ENCODE measurements at regions of chr17 and their contacts with region 1.

Region 1: DNA sequence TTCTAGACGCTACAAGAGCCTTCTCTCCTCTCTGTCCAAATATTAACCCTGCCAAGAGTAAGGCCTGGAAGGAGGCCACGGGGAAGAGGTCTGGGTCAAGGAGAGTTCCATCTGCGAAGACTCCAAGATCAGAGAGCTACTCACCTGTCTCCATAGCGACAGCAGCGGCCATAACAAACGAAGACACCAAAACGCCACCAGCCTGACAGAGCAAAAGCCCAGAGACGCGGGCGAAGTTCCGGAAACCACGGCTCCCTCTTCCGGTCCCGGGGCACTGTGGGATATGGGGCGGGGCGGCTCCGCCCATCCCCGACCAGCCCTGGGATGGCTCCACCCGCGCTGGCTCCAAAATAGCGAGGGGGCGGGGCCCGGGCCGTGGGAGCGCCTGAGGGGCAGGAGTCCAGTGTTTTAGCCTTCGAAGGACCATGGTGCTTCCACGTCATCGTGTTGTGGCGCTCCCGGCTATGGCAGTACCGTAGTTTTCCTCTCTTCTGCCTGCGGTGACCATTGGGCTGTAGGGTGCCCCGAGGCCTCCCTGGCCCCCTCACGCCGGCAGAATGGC is at the starts of genes C17orf100 and MED31:
- DNase-seq: peak; percentile 85 to 96 (median 91)
- ATAC-seq: peak; percentile 90 to 96 (median 96)
- H3K4me3 ChIP-seq: peak within 1 kb of the TSS; percentile 69 to 79
- H3K4me3 Mint-ChIP-seq: peak within 1 kb of the TSS; percentile 97 to 99 (median 98)
- H3K27ac ChIP-seq: peak within 1 kb of the TSS; percentile 97
- H3K27ac Mint-ChIP-seq: peak within 1 kb of the TSS; percentile 99
- H3K4me1 ChIP-seq: peaks cover 20 to 36% of the 10 kb centered on the region in 2 experiments
- H3K4me1 Mint-ChIP-seq: peaks cover 68 to 80% (median 75%) of the 10 kb centered on the region in 3 donors
- H3K27me3 ChIP-seq: peaks cover 0 to 13% of the 10 kb centered on the region in 2 experiments
- H3K27me3 Mint-ChIP-seq: no peaks in the 10 kb centered on the region
- total RNA-seq, gene C17orf100: 1.1 to 3.5 (median 2.8) TPM
- total RNA-seq, gene MED31: 18.9 to 26.3 (median 22.1) TPM

Region 2: DNA sequence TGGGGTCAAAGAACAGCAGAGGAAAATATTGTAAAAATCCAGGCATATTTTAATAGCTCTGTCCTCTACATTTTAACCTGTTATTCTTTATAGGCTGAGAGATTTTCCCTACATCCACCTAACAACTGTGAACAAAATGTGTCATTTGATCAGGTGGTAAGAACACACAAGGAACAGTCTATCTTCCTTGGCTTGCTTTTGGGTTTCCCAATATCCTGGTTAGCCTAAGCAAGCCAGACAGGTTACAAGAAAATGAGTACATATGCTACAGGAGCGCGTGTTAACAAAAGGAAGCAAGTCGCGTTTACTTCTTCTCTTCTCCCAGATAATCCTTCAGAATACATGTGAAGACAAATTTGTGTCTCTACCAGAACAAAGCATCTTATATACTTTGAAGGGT is 64.1 kb before region 1 on chr17:
- CTCF ChIA-PET with region 1: no interaction called
- POLR2A ChIA-PET with region 1: no interaction called
- DNase-seq: no peak
- ATAC-seq: no peak
- H3K4me3 ChIP-seq: no peak overlapping the region
- H3K4me3 Mint-ChIP-seq: no peak overlapping the region
- H3K27ac ChIP-seq: no peak overlapping the region
- H3K27ac Mint-ChIP-seq: no peak overlapping the region
- H3K4me1 ChIP-seq: no peaks in the 10 kb centered on the region
- H3K4me1 Mint-ChIP-seq: no peaks in the 10 kb centered on the region
- H3K27me3 ChIP-seq: no peaks in the 10 kb centered on the region
- H3K27me3 Mint-ChIP-seq: no peaks in the 10 kb centered on the region

Region 3: GRCh38 chr17:6630390-6630789 is 21.0 kb before region 1 on chr17:
- CTCF ChIA-PET with region 1: no interaction called
- POLR2A ChIA-PET with region 1: no interaction called
- DNase-seq: no peak
- ATAC-seq: no peak
- H3K4me3 ChIP-seq: no peak overlapping the region
- H3K4me3 Mint-ChIP-seq: no peak overlapping the region
- H3K27ac ChIP-seq: no peak overlapping the region
- H3K27ac Mint-ChIP-seq: no peak overlapping the region
- H3K4me1 ChIP-seq: no peaks in the 10 kb centered on the region
- H3K4me1 Mint-ChIP-seq: peaks cover 5 to 9% (median 5%) of the 10 kb centered on the region in 3 donors
- H3K27me3 ChIP-seq: no peaks in the 10 kb centered on the region
- H3K27me3 Mint-ChIP-seq: no peaks in the 10 kb centered on the region

Region 4: GRCh38 chr17:6640536-6641373 is 10.7 kb before region 1 on chr17 and contains the starts of genes KIAA0753 and TXNDC17:
- CTCF ChIA-PET with region 1: interaction called in 1 of 2 experiments, 10 read pairs
- POLR2A ChIA-PET with region 1: interaction called in 1 of 2 experiments, 31 read pairs
- DNase-seq: peak; percentile 63 to 94 (median 82)
- ATAC-seq: peak; percentile 91 to 96 (median 94)
- H3K4me3 ChIP-seq: peak within 1 kb of the TSS; percentile 89 to 98
- H3K4me3 Mint-ChIP-seq: peak within 1 kb of the TSS; percentile 92 to 95 (median 95)
- H3K27ac ChIP-seq: peak within 1 kb of the TSS; percentile 80
- H3K27ac Mint-ChIP-seq: peak within 1 kb of the TSS; percentile 96 to 97
- H3K4me1 ChIP-seq: peaks cover 12 to 37% of the 10 kb centered on the region in 2 experiments
- H3K4me1 Mint-ChIP-seq: peaks cover 50 to 67% (median 58%) of the 10 kb centered on the region in 3 donors
- H3K27me3 ChIP-seq: no peaks in the 10 kb centered on the region
- H3K27me3 Mint-ChIP-seq: no peaks in the 10 kb centered on the region
- total RNA-seq, gene KIAA0753: 12.4 to 16.9 (median 15.9) TPM
- total RNA-seq, gene TXNDC17: 14.6 to 21.3 (median 17.9) TPM

Measured in T-cell (primary cell).